Naive thymus-derived CD4-positive, alpha-beta T cell (primary cell): ENCODE measurements at regions of chr5 and their contacts with region 1.

Region 1: DNA sequence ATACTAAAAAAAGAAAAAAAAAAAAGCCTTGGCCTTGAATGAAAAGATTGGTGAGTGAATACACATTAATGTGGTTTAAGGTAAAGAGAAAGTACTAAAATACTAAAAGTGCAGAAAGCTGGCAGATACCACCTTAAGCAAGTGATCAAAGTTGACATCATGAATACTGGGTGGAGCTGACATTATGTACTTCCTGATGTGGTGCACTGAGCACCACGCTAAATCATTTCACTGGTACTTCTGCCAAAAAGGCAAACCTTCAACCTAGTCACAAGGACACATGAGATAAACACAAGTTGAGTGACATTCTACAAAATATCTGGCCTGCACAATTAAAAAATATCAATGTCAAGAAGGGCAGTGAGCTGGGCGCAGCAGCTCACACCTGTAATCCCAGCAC is 33.8 kb upstream of the PANK3 start:
- DNase-seq: peak in 7 of 9 donors; percentile 25 to 61 (median 55)
- ATAC-seq: peak; percentile 98
- H3K4me3 ChIP-seq: peak overlapping the region; percentile 19
- H3K4me3 Mint-ChIP-seq: peak overlapping the region in 8 of 10 donors; percentile 33 to 83 (median 68)
- H3K27ac ChIP-seq: peak overlapping the region; percentile 47
- H3K27ac Mint-ChIP-seq: peak overlapping the region in 8 of 9 donors; percentile 62 to 89 (median 84)
- H3K4me1 ChIP-seq: peaks cover 4 to 9% of the 10 kb centered on the region in 2 donors
- H3K4me1 Mint-ChIP-seq: peaks cover 8 to 20% (median 16%) of the 10 kb centered on the region in 7 donors
- H3K27me3 ChIP-seq: no peaks in the 10 kb centered on the region
- H3K27me3 Mint-ChIP-seq: no peaks in the 10 kb centered on the region

Region 2: GRCh38 chr5:168165221-168165965 is 447.6 kb before region 1 on chr5:
- CTCF ChIA-PET with region 1: no interaction called
- POLR2A ChIA-PET with region 1: no interaction called
- intact Hi-C with region 1: loop called in 1 of 2 experiments (anchors 5 kb)
- DNase-seq: no peak
- ATAC-seq: no peak
- H3K4me3 ChIP-seq: no peak overlapping the region
- H3K4me3 Mint-ChIP-seq: peak overlapping the region in 2 of 10 donors; percentile 8 to 13
- H3K27ac ChIP-seq: no peak overlapping the region
- H3K27ac Mint-ChIP-seq: no peak overlapping the region
- H3K4me1 ChIP-seq: no peaks in the 10 kb centered on the region
- H3K4me1 Mint-ChIP-seq: peaks cover 0 to 20% (median 8%) of the 10 kb centered on the region in 7 donors
- H3K27me3 ChIP-seq: no peaks in the 10 kb centered on the region
- H3K27me3 Mint-ChIP-seq: peaks cover 0 to 17% (median 0%) of the 10 kb centered on the region in 5 donors

Region 3: GRCh38 chr5:168486136-168486879 is 126.7 kb before region 1 on chr5 and contains the start of gene RARS1:
- CTCF ChIA-PET with region 1: no interaction called
- POLR2A ChIA-PET with region 1: no interaction called
- intact Hi-C with region 1: loop called in 1 of 2 experiments (anchors 1 kb)
- DNase-seq: peak; percentile 65 to 89 (median 76)
- ATAC-seq: peak; percentile 98
- H3K4me3 ChIP-seq: peak within 1 kb of the TSS; percentile 93
- H3K4me3 Mint-ChIP-seq: peak within 1 kb of the TSS; percentile 96 to 100 (median 99)
- H3K27ac ChIP-seq: peak within 1 kb of the TSS; percentile 73
- H3K27ac Mint-ChIP-seq: peak within 1 kb of the TSS; percentile 88 to 96 (median 92)
- H3K4me1 ChIP-seq: peaks cover 7% of the 10 kb centered on the region in 2 donors
- H3K4me1 Mint-ChIP-seq: peaks cover 30 to 52% (median 44%) of the 10 kb centered on the region in 7 donors
- H3K27me3 ChIP-seq: no peaks in the 10 kb centered on the region
- H3K27me3 Mint-ChIP-seq: peaks cover 0 to 3% (median 0%) of the 10 kb centered on the region in 5 donors
- total RNA-seq, gene RARS1: 59.1 to 110 (median 81.3) TPM

Region 4: DNA sequence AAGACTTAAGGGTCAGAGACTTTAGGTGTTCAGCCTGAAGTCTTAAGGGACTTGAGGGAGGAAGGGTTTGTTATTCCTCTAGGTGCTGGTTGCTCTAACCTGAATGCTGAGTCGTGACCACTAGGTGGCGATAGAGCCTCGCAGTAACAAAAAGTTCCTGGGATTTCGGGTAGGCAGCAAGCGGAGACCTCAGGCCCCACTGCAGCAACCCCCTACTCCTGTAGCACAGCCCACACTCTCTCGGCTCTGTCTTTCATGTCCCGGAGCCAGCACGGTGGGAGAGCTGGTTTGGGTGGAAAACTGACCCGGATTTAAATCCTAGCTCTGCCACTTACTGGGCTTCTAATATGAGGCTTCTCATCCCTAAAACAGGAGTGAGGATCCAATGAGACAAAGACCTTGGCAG is 66.5 kb after region 1 on chr5:
- CTCF ChIA-PET with region 1: no interaction called
- POLR2A ChIA-PET with region 1: no interaction called
- intact Hi-C with region 1: loop called in 1 of 2 experiments (anchors 5 kb)
- DNase-seq: peak; percentile 11 to 59 (median 47)
- ATAC-seq: peak; percentile 55
- H3K4me3 ChIP-seq: no peak overlapping the region
- H3K4me3 Mint-ChIP-seq: no peak overlapping the region
- H3K27ac ChIP-seq: no peak overlapping the region
- H3K27ac Mint-ChIP-seq: no peak overlapping the region
- H3K4me1 ChIP-seq: peaks cover 0 to 5% of the 10 kb centered on the region in 2 donors
- H3K4me1 Mint-ChIP-seq: peaks cover 6 to 20% (median 14%) of the 10 kb centered on the region in 7 donors
- H3K27me3 ChIP-seq: no peaks in the 10 kb centered on the region
- H3K27me3 Mint-ChIP-seq: peaks cover 0 to 6% (median 0%) of the 10 kb centered on the region in 5 donors